ENCODE measurements at regions of chr1 and their contacts with region 1.

Region 1: DNA sequence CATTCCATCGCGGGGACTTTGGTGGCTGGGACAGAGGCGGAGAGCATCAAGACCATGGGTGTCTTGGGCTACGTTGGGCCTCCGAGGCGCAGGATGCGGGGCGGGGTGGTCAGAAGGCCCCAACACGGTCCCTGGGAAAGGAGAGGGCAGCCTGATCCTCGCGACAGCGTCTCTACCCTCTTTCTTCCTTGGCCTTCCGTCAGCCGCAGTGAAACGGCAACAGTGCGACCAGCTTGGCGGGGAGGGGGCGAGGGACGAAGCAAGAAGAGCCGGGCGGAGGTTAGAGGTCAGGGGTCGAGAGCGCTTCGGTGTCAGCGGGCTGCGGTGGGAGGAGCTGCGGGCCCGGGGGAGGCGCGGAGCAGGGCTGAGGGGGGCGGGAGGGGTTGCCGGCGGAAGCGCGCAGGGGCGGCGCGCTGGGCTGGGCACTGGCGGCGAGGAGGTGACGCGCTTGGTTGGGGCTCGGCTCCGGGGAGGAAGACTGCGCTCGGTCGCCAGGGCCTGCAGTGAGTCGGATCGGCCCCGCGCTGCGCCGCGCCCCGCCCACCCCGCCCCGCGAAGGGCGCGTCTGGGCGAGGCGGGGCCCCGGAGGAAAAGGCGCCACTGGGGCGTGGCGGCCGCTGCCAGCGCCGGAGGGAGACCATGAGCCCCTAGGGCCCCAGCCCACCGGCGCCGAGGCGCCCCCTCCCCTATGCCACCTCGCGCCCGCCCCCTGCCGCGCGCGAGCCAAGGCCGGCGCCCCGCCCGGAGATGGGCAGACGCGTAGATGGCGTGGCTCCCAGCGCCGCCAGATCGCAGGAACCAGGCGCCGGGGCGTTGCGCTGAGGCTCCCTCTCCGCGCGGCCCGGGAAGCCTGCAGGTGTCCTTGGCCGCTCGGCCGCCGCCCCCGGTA is at the start of gene KCNC4:
- DNase-seq: peak; percentile 48 to 96 (median 77)

Region 2: DNA sequence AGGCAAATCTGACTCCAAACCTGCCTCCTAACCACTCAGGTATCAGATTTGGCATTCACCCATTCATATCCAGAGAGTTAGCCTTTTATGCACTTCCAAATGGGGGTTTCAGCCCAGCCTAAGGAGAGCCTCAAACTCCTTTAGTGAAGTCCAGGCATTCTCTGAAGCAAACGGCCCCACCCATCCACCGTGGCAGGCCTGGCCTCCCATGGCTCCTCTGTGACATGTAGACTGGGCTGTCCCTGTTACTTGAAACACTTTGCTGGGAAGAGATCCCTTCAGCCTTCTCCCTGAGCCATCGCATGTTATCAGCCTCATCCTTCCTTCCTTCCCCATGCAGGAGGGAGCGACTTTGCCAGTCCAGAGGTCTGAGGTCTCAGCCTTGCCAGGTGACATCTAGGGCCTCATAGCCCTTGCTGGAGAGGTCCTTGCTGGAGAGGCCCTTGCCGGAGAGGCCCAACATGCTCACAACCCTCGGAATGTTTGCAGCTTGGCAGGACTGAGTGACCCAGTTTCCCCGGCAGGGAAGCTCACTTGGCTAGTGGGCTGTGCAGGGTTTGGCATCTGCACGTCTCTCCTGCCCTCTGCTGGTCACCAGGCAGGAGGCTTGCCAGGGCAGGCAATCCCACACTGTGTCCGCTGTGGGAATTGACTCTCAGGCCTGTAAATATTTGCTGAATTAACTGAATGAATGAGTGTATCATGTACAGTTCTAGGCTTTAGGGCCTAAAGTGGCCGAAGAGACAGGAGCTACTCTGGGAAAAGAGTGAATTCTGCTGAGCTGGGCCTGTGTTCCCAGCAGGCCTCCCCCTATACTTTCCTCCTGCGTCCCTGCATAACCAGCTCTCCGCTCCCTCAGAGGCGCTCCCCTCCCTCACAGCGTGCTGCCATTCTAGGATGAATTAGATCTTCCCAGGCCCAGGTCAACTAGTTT is 102.5 kb after region 1 on chr1:
- intact Hi-C with region 1: loop called (anchors 1 kb)
- DNase-seq: peak; percentile 75 to 98 (median 86)

Region 3: DNA sequence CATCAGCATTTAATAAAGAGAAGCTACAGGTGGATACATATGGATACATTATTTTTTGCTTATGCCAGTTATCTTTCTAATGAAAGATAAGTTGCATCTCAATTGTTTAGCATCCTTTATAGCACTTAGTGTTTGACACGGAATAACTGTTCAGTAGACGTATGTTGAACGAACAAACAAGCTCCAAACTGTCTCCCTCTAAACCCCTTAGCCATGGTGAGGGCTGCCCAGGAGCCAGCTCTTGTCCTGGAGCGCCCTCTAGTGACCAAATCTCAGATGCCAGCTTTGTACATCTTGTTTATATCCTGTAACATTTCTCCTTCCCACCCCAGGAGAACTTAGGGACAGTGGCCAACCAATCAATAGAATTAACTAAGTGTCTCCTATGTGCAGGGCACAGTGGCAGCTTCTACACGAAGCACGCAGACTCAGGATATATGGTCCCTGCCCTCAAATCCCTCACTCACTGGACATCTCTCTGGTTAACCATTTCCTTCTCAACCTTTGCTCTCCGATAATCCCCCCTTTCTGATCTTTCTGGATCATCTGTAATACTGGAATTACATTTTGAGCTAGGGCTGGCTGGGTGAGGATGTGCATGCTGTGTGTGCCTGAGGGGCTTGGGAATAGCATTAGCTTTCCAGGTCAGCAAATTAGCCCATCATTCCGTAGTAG is 286.1 kb after region 1 on chr1:
- intact Hi-C with region 1: loop called (anchors 5 kb)
- DNase-seq: peak in 9 of 10 donors; percentile 55 to 96 (median 83)

Measured in posterior cingulate gyrus (tissue), 11 donors.